Heart right ventricle (tissue), 16 donors: ENCODE measurements at regions of chr18 and their contacts with region 1.

Region 1: DNA sequence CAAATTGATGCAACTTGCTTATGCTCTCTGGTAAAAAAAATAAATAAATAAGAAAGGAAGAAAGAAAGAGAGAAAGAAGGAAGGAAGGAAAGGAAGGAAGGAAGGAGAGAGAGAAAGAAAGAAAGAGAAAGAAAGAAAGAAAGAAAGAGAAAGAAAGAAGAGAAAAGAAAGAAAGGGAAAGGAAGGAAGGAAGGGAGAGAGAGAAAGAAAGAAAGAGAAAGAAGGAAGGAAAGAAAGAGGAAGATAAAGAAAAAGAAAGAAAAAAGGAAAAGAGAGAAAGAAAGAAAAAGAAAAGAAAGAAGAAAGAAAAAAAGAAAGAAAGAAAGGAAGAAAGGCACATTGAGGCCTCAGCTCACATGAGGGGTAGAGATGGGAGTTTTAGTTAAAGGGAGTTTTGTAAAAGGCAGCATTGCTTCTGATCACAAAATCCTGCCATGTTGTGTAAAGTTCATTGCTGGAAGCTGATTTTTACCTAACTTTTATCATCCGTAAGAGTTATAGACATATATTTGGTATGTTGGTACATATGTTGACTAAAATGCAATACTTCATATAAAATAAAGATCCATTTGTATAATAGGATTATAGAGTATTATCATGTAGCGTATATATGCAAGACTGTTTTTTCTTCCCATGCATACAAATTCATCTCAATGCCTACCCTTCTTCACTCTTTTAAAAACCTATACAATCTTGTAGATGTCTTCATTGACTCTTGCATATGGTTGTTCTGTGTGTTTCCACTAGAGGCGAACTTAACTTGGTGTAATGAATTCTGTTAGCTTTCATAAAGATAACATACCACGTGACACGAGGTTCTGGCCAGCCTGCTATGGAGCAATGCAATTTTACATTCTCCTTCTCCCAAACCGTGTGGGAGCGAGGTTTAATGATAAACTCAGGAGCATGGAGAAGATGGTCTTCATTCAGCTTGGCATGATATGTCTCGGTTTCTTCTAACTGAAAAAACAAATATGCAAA is 32.8 kb downstream of the MYOM1 start:
- DNase-seq: no peak
- ATAC-seq: peak in 4 of 8 donors; percentile 17 to 59 (median 46)
- H3K4me3 ChIP-seq: no peak overlapping the region
- H3K27ac ChIP-seq: no peak overlapping the region
- H3K4me1 ChIP-seq: peaks cover 0 to 64% (median 16%) of the 10 kb centered on the region in 9 donors
- H3K27me3 ChIP-seq: no peaks in the 10 kb centered on the region
- CTCF ChIP-seq: peak in 6 of 9 donors; percentile 13 to 42 (median 30)

Region 2: GRCh38 chr18:3217948-3218647 is 31.1 kb after region 1 on chr18:
- intact Hi-C with region 1: loop called in 2 of 10 experiments (anchors 5 kb)
- DNase-seq: no peak
- ATAC-seq: peak in 7 of 8 donors; percentile 31 to 70 (median 54)
- H3K4me3 ChIP-seq: peak overlapping the region in 9 of 10 donors; percentile 44 to 65 (median 58)
- H3K27ac ChIP-seq: peak overlapping the region; percentile 80 to 96 (median 95)
- H3K4me1 ChIP-seq: peaks cover 0 to 35% (median 16%) of the 10 kb centered on the region in 9 donors
- H3K27me3 ChIP-seq: no peaks in the 10 kb centered on the region
- CTCF ChIP-seq: no peak